ENCODE measurements at regions of chr14 and their contacts with region 1.

Region 1: DNA sequence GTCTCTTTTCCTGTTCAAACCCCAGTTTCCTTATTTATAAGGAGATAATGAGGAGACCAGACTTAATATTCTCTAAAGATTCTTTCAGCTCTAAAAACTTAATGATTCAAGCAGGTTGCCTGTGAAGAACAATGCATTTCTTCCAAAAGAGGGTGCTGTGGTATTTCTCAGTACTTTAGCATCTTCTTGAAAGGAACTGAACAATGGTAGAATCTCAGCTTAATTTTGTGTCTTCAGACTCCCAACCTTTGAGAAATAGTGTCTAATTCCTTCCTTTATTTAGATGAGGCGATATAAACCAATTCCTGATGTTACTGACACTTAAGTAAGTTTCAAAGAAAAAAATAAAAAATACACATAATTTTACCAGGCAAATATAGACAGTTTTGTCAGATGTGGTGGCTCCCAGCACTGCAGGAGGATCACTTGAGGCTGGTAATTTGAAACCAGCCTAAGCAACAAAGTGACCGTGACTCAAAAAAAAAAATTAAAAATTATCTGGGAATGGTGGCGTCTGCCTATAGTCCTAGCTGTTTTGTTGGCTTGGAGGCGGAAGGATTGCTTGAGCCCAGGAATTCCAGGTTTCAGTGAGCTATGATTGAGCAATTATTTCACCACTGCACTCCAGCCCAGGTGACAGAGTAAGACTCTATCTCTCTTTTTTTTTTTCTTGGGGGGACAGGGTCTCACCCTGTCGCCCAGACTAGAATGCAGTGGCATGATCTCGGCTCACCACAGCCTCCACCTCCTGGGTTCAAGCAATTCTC is 76.9 kb upstream of the PSMA6 start:
- DNase-seq: no peak
- H3K4me3 ChIP-seq: no peak overlapping the region
- H3K27ac ChIP-seq: no peak overlapping the region
- H3K4me1 ChIP-seq: peaks cover 0 to 4% (median 0%) of the 10 kb centered on the region in 4 experiments; a peak in 2 of 7 replicates
- H3K27me3 ChIP-seq: no peaks in the 10 kb centered on the region
- CTCF ChIP-seq: peak in 2 of 3 experiments; percentile 31 to 48; a peak in 2 of 4 replicates
- EP300 ChIP-seq: no peak
- POLR2A ChIP-seq: no peak
- RAD21 ChIP-seq: peak; percentile 60 to 67

Region 2: GRCh38 chr14:35229495-35230089 is 14.3 kb after region 1 on chr14:
- CTCF ChIA-PET with region 1: interaction called, 16 read pairs
- POLR2A ChIA-PET with region 1: no interaction called
- DNase-seq: no peak
- H3K4me3 ChIP-seq: no peak overlapping the region
- H3K27ac ChIP-seq: no peak overlapping the region
- H3K4me1 ChIP-seq: no peaks in the 10 kb centered on the region
- H3K27me3 ChIP-seq: no peaks in the 10 kb centered on the region
- CTCF ChIP-seq: peak in 1 of 3 experiments; percentile 11; a peak in 1 of 4 replicates
- EP300 ChIP-seq: no peak
- POLR2A ChIP-seq: no peak
- RAD21 ChIP-seq: peak in 1 of 2 experiments; percentile 28